Activated T-helper 2 cell treated with anti-CD3 and anti-CD28 coated beads, Interferon-gamma antibody, Interleukin-2, Interleukin-4, amounts not matched to agents 10 μg/mL and 5 μg/mL and 100 μg/mL, durations not matched to agents 14 hours and 24 hours and 36 hours (primary cell): ENCODE measurements at regions of chr10 and their contacts with region 1.

Region 1: GRCh38 chr10:73785221-73785720 is at the start of gene ZSWIM8:
- DNase-seq: peak; percentile 80
- H3K4me3 Mint-ChIP-seq: peak within 1 kb of the TSS; percentile 92
- H3K27ac Mint-ChIP-seq: peak within 1 kb of the TSS; percentile 91
- H3K4me1 Mint-ChIP-seq: peaks cover 34% of the 10 kb centered on the region
- H3K27me3 Mint-ChIP-seq: no peaks in the 10 kb centered on the region
- total RNA-seq, gene ZSWIM8: 50.0 and 55.3 TPM in 2 replicates

Region 2: DNA sequence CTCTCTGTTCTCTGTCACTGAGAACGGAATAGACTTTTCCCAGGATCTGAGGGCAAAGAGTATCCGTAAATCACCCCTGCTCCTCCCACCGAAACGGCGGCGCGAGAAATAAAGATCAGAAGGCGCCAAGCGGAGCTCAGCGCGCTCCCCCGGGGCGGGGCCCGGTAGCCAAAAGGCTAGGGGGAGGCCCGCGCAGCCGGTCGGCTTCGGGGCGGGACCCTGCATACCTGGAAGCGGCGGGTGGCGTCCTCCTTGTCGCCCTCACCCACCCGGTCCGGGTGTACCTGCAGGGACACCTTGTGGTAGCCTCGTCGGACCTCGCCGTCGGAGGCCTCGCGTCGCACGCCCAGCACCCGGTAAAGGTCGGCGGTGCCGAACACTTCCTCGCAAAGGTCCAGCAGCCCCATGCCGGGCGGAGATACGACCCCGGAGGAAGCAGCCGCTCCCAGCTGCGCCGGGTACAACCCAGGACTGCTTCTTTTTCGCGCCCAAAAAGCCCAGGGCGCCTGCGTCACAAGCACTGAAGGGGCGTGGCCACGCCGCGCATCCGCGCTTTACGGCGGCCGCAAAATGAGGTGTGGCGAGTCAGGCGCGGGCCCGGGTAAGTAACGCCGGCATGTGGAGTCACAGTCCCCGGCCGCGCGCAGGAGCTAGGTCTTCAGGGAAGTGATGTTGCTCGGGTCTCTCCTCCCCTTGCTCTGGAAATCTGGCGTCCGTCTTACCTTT is 538.3 kb before region 1 on chr10 and contains the start of gene DNAJC9:
- intact Hi-C with region 1: loop called (anchors 1 kb)
- DNase-seq: peak; percentile 96
- H3K4me3 Mint-ChIP-seq: peak within 1 kb of the TSS; percentile 99
- H3K27ac Mint-ChIP-seq: peak within 1 kb of the TSS; percentile 95
- H3K4me1 Mint-ChIP-seq: peaks cover 62% of the 10 kb centered on the region
- H3K27me3 Mint-ChIP-seq: no peaks in the 10 kb centered on the region
- total RNA-seq, gene DNAJC9: 50.8 and 52.7 TPM in 2 replicates

Region 3: DNA sequence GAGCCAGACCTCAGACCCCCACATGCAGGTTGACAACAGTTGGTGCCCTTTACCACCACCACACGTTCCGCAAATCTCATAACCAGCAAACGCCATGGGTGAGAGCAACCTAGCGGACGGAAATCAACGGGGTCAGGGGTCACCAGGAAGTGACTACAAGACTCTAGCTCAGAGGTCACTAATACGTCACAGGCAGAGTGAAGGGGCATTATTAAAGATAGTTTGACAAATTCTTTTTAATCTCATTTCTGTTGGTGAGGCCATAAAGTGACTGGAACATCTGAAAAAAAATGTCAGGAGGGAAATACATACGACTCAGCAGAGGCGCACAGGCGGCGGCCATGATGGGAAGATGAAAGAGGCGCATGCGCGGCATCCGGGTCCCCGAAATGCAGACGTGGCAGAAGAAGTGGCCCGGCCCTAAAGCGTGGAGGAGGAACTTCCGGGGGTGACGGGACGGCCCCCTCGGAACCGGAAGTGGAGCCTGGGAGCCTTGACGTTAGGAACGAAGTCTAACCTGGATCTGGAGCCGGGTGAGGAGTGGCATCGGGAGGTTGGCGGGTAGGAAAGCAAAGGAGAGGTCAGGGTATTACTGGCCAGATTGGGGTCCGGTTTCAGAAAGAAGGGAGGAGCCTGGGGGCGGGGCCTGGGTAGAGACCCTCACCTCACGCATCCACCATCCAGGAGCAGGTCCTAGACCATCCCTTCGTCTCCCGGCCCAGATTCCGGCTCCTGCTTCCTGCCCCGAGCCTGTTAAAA is 41.2 kb before region 1 on chr10 and contains the start of gene SEC24C:
- intact Hi-C with region 1: loop called (anchors 1 kb)
- DNase-seq: peak; percentile 93
- H3K4me3 Mint-ChIP-seq: peak within 1 kb of the TSS; percentile 97
- H3K27ac Mint-ChIP-seq: peak within 1 kb of the TSS; percentile 100
- H3K4me1 Mint-ChIP-seq: peaks cover 27% of the 10 kb centered on the region
- H3K27me3 Mint-ChIP-seq: no peaks in the 10 kb centered on the region
- total RNA-seq, gene SEC24C: 119 TPM in 2 replicates

Region 4: DNA sequence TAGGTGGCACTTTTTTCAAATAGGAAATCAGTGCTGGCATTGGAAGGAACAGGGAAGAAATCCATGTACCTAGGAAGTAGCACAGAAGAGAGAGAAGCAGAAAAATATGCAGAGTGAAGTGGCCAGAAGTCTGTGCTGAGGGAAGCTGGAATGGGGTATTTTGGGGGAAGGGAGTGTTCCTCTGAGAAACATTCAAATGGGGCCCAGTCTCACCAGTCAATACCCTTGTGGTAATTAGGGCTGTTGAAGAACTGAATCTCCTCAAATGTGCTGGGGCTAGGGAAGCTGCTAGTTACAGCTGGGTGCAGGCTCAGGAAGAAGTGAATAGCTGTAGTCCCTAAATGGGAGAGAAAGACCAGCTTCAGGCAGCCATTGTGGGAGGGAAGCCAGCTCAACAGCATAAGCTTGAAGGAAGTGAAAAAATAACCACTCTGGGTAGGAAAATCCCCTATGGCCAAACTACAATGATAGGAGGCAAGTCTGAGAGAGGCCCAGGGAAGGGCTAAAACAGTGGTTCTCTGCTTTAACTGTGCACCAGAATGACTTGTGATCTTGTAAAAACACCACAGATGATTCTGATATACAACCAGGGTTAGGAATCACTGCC is 18.5 kb after region 1 on chr10:
- intact Hi-C with region 1: loop called (anchors 1 kb)
- DNase-seq: no peak
- H3K4me3 Mint-ChIP-seq: no peak overlapping the region
- H3K27ac Mint-ChIP-seq: peak overlapping the region; percentile 71
- H3K4me1 Mint-ChIP-seq: peaks cover 19% of the 10 kb centered on the region
- H3K27me3 Mint-ChIP-seq: no peaks in the 10 kb centered on the region

Region 5: GRCh38 chr10:73879296-73880173 is 94.3 kb after region 1 on chr10:
- intact Hi-C with region 1: loop called (anchors 10 kb)
- DNase-seq: peak; percentile 92
- H3K4me3 Mint-ChIP-seq: no peak overlapping the region
- H3K27ac Mint-ChIP-seq: peak overlapping the region; percentile 35
- H3K4me1 Mint-ChIP-seq: peaks cover 37% of the 10 kb centered on the region
- H3K27me3 Mint-ChIP-seq: no peaks in the 10 kb centered on the region

Region 6: DNA sequence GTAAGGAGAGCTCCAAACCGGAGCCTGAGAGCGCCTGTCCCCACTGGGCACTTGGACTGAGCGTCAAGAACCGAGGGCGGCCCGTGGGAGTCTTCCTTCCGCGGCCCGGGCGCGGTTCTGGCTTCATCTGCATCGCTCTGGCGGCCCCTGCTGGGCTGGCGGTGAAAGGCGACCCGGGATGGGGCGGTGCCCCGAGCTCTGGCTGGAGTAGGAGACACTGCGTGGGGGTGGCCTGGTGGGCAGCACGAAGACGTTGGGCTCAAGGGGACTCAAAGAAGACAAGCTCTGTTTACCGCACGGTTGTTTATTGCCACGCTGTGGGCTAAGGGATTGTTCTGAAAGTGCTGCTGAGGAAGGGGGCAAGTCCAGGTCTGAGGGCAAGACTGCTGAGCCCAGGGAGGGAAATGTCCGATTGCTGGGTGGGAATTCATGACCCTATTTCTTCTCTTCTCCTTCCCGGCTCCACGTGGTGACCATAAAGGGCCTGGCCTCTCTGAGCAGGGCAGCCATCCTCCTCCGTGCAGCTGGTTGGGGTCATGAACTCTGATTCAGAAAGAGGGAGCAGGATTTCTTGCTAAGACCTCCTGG is 155.5 kb after region 1 on chr10:
- intact Hi-C with region 1: no loop called
- DNase-seq: peak; percentile 80
- H3K4me3 Mint-ChIP-seq: no peak overlapping the region
- H3K27ac Mint-ChIP-seq: no peak overlapping the region
- H3K4me1 Mint-ChIP-seq: peaks cover 10% of the 10 kb centered on the region
- H3K27me3 Mint-ChIP-seq: peaks cover 6% of the 10 kb centered on the region

Region 7: DNA sequence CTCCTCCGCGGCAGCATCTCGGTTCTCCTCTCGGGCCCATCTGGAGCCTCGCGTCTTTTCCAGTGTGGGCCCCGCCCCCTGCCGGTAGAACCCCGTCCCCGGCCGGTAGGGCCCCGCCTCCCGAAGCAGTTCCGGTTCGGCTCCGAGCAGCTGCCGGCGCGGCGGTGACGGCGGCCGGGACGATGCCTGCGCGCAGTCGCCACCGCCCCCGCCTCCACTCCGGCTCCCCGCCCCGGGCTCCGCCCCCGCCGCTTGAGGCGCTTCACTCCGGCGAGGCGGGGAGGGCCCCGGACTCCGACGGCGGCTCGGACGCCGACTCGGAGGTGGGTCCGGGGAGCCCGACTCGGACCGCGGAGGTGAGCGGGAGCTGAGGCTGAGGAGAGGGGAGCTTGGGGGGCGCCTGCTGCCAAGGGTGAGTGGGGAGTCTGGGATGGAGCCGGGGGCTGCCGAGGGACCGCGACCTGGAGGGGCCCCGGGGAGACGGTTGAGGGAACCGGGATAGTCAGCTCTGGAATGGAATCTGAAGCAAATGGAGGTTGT is 1326.2 kb after region 1 on chr10 and contains the start of gene SAMD8:
- intact Hi-C with region 1: loop called (anchors 10 kb)
- DNase-seq: peak; percentile 97
- H3K4me3 Mint-ChIP-seq: peak within 1 kb of the TSS; percentile 89
- H3K27ac Mint-ChIP-seq: peak within 1 kb of the TSS; percentile 90
- H3K4me1 Mint-ChIP-seq: peaks cover 43% of the 10 kb centered on the region
- H3K27me3 Mint-ChIP-seq: no peaks in the 10 kb centered on the region
- total RNA-seq, gene SAMD8: 14.9 and 15.6 TPM in 2 replicates